ENCODE measurements at regions of chr3 and their contacts with region 1.

Region 1: DNA sequence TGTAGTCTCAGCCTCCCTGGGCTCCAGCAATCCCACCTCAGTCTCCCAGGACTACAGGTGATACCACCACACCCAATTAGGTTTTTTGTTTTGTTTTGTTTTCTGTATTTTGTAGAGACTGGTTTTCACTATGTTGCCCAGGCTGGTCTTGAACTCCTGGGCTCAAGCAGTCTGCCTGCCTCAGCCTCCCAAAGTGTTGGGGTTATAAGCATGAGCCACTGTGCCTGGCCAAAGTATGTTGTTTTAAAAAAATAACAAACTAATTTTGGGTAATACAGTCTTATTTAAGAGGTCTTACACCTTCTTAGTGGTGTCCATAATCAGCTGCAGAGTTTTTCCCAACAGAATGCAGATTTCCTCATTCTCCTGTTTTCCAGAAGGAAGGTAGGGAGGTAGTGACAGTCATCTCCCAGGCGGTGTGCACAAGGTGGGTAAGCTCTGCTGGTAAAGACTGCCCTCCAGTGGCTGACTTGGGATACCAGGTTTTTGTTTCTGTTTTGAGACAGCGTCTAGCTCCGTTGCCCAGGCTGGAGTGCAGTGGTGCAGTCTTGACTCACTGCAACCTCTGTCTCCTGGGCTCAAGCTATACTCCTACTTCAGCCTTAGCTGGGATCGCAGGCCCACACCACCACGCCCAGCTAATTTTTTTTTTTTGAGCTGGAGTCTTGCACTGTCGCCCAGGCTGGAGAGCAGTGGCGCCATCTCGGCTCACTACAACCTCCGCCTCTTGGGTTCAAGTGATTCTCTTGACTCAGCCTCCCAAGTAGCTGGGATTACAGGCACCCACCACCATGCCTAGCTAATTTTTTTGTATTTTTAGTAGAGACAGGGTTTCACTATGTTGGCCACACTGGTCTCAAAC is 58.4 kb downstream of the MAP6D1 start:
- DNase-seq: peak; percentile 83
- ATAC-seq: peak; percentile 93
- H3K4me3 Mint-ChIP-seq: no peak overlapping the region
- H3K27ac Mint-ChIP-seq: no peak overlapping the region
- H3K4me1 Mint-ChIP-seq: peaks cover 11% of the 10 kb centered on the region
- H3K27me3 Mint-ChIP-seq: no peaks in the 10 kb centered on the region

Region 2: GRCh38 chr3:183392186-183393034 is 374.6 kb before region 1 on chr3:
- CTCF ChIA-PET with region 1: no interaction called
- POLR2A ChIA-PET with region 1: no interaction called
- DNase-seq: no peak
- ATAC-seq: no peak
- H3K4me3 Mint-ChIP-seq: no peak overlapping the region
- H3K27ac Mint-ChIP-seq: no peak overlapping the region
- H3K4me1 Mint-ChIP-seq: peaks cover 6% of the 10 kb centered on the region
- H3K27me3 Mint-ChIP-seq: no peaks in the 10 kb centered on the region

Region 3: DNA sequence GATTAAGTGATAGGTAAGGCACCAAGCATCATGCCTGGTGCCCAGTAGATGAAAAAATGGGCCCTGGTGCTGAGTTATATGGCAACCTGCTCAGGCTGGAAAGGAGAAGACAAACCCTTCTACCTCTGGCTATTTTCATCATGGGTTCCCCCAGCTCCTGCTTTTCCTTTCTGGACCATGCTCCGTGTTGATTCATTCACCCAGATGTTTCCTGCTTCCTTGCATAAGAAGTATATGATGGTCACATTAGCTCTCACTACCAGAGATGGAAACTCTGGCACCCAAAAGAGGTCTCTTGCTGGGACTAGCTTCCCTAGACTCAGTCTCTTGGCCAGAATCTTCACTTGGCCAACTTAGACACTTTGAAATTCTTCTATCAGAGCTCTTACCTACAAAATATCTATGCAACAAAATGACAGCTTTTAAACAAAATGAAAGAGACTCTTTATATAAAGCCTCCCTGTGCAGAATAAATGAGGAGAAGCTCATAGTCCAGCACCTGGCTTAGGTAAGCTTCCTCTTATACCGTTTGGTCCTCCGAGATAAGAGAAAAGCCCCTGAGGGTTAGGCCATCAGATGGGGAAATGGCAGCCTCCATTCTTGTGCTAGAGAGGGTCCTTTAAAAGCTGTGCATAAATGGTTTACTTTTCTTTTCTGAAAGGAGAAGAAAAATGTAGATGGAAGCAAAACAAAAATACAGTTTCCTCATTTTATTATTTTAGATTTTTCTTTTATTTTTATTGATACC is 291.8 kb before region 1 on chr3:
- CTCF ChIA-PET with region 1: interaction called, 53 read pairs
- POLR2A ChIA-PET with region 1: no interaction called
- DNase-seq: no peak
- ATAC-seq: no peak
- H3K4me3 Mint-ChIP-seq: no peak overlapping the region
- H3K27ac Mint-ChIP-seq: no peak overlapping the region
- H3K4me1 Mint-ChIP-seq: peaks cover under 1% of the 10 kb centered on the region
- H3K27me3 Mint-ChIP-seq: peaks cover 3% of the 10 kb centered on the region

Region 4: GRCh38 chr3:183591881-183592521 is 175.0 kb before region 1 on chr3:
- CTCF ChIA-PET with region 1: interaction called, 10 read pairs
- POLR2A ChIA-PET with region 1: no interaction called
- DNase-seq: no peak
- ATAC-seq: no peak
- H3K4me3 Mint-ChIP-seq: peak overlapping the region; percentile 44
- H3K27ac Mint-ChIP-seq: peak overlapping the region; percentile 58
- H3K4me1 Mint-ChIP-seq: peaks cover 20% of the 10 kb centered on the region
- H3K27me3 Mint-ChIP-seq: no peaks in the 10 kb centered on the region

Region 5: DNA sequence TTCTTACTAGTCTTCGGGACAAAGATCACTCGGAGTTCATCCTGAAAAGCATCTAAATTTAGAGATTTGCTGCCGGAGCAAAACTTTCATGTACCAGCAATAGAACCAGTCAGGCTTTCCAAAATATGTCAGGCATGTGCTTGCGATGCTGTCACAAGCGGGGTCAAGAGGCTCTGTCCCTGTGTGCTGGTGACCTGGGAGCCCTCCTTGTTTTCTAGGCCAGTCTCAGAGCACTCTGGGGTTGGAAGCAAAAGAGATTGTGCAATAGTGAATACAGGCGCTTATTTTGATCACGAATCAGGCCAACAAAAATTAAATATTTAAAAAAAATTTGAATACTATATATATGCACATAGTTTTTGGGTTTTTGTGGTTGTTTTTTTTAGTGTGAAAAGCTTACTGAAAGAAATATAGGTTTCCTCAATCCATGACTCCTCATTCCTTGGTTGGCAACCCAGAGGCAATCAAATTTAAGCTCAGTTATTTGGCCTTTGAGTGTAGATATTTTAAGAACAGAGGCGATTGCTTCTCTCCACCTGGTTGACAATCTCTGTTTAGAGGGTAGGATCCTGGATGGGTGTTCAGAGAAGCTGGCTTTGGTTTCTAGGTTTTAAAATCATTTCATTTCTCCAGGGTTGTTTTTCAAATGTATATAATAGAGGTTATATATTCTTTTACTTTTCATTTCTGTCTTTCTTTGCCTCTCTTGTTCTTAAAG is 139.9 kb before region 1 on chr3:
- CTCF ChIA-PET with region 1: no interaction called
- POLR2A ChIA-PET with region 1: no interaction called
- DNase-seq: no peak
- ATAC-seq: no peak
- H3K4me3 Mint-ChIP-seq: no peak overlapping the region
- H3K27ac Mint-ChIP-seq: no peak overlapping the region
- H3K4me1 Mint-ChIP-seq: no peaks in the 10 kb centered on the region
- H3K27me3 Mint-ChIP-seq: peaks cover 5% of the 10 kb centered on the region

Region 6: DNA sequence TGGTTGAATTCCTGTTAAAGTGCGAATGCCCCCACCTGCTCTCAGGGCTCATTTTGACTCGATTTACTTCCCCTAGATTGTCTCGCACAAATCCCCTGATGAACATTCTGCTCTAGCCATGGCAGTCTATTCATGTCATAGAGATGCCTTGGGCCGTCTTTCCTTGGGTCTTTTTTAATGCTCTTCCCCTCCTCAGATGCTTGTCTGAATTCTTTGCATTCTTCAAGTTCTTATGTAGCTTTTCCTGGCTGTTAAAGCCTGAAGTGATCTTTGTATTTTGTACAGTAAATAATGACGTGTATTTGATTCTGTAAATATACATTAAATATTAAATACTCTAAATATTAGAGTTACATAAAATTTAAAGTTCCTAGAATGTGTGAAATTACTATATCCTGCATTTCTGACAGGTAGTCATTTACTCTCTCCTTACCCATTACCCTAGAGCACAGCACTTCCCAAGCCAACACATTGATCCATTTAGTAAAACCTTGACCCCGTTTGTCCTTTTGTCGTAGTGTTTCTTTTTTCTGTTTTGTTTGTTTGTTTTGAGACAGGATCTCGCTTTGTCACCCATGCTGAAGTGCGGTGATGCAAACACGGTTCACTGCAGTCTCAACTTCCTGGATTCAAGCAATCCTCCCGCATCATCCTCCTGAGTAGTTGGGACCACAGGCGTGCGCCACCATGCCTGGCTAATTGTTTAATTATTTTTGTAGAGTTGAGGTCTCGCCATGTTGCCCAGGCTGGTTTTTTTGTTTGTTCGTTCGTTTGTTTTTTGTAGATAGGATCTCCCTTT is 21.5 kb before region 1 on chr3:
- CTCF ChIA-PET with region 1: interaction called, 10 read pairs
- POLR2A ChIA-PET with region 1: no interaction called
- DNase-seq: no peak
- ATAC-seq: no peak
- H3K4me3 Mint-ChIP-seq: no peak overlapping the region
- H3K27ac Mint-ChIP-seq: no peak overlapping the region
- H3K4me1 Mint-ChIP-seq: no peaks in the 10 kb centered on the region
- H3K27me3 Mint-ChIP-seq: no peaks in the 10 kb centered on the region

Region 7: DNA sequence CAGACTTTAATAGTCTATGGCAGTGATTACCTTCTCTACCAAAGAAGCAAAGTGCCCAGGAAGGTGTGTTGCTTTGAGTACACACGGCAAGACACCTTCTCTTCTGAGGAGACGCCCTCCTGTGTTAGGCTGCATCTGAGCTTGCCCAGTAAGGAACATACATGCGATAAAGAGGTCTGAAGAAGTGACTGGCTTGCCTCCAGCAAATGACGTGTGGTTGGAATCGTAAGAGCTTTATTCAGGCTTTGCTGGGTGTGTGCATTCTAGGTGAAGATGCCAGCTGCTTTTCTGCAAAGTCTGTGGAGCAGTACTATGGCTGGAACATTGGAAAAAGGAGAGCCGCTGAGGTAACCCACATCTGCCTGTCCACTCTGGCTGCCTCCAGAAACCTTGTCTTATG is 36.0 kb after region 1 on chr3:
- CTCF ChIA-PET with region 1: no interaction called
- POLR2A ChIA-PET with region 1: no interaction called
- DNase-seq: no peak
- ATAC-seq: no peak
- H3K4me3 Mint-ChIP-seq: no peak overlapping the region
- H3K27ac Mint-ChIP-seq: no peak overlapping the region
- H3K4me1 Mint-ChIP-seq: no peaks in the 10 kb centered on the region
- H3K27me3 Mint-ChIP-seq: no peaks in the 10 kb centered on the region

Region 8: GRCh38 chr3:183825456-183826161 is 58.6 kb after region 1 on chr3 and contains the start of gene MAP6D1:
- CTCF ChIA-PET with region 1: no interaction called
- POLR2A ChIA-PET with region 1: no interaction called
- DNase-seq: peak; percentile 61
- ATAC-seq: peak; percentile 75
- H3K4me3 Mint-ChIP-seq: peak within 1 kb of the TSS; percentile 70
- H3K27ac Mint-ChIP-seq: peak within 1 kb of the TSS; percentile 2
- H3K4me1 Mint-ChIP-seq: peaks cover 10% of the 10 kb centered on the region
- H3K27me3 Mint-ChIP-seq: peaks cover 3% of the 10 kb centered on the region
- total RNA-seq, gene MAP6D1: 0.90 to 0.91 TPM

Region 9: DNA sequence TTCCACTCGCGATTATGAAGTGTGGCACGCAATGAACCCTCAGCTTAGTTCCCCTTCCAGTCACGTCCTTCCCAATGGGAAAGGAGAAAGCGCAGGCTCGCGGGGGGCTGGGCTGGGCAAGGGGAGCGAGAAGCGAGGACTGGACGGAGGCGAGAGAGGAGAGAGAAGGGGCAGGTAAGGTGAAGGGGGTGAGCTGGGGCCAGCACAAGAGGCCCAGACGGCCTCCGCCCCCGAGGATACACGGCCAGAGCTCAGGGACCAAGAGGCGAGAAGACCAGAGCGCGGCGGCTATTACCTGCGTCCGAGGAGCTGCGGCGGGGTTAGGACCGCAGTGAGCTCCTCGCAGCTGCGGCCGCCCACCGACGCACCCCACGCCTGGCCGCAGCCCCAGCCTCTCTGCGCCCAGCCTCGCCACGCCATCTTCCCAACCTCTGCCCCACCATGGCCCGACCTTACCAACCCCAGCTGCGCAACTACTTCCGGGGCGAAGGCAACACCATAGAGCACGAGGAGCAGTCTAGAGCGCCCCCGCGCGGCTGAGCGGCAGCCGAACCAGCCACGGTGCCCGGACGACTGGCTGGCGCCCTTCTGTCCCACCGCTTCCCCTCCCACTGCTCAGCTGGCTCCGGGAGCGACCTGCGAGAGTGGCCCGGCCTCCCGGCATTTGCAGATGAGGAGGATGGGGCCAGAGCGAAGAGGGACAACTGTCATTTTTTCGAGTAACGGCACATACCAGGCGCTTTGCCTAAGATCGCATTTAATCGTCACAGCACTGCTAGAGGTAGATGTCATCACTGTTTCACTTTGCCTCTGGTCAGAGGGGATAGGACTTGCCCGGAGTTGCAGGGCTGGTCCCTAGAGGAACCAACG is 117.7 kb after region 1 on chr3 and contains the start of gene PARL:
- CTCF ChIA-PET with region 1: interaction called, 14 read pairs
- POLR2A ChIA-PET with region 1: no interaction called
- DNase-seq: peak; percentile 97
- ATAC-seq: peak; percentile 100
- H3K4me3 Mint-ChIP-seq: peak within 1 kb of the TSS; percentile 97
- H3K27ac Mint-ChIP-seq: peak within 1 kb of the TSS; percentile 94
- H3K4me1 Mint-ChIP-seq: peaks cover 28% of the 10 kb centered on the region
- H3K27me3 Mint-ChIP-seq: peaks cover under 1% of the 10 kb centered on the region
- total RNA-seq, gene PARL: 45.6 to 49.3 TPM

Measured in activated CD8-positive, alpha-beta T cell treated with anti-CD3 and anti-CD28 coated beads, Interleukin-2, amount 10 ng/mL, durations not matched to agents 7 days and 5 days (primary cell).